Activated CD4-positive, alpha-beta T cell treated with anti-CD3 and anti-CD28 coated beads, Interleukin-2, amount 10 ng/mL, durations not matched to agents 24 days and 14 days (primary cell): ENCODE measurements at regions of chr16 and their contacts with region 1.

Region 1: DNA sequence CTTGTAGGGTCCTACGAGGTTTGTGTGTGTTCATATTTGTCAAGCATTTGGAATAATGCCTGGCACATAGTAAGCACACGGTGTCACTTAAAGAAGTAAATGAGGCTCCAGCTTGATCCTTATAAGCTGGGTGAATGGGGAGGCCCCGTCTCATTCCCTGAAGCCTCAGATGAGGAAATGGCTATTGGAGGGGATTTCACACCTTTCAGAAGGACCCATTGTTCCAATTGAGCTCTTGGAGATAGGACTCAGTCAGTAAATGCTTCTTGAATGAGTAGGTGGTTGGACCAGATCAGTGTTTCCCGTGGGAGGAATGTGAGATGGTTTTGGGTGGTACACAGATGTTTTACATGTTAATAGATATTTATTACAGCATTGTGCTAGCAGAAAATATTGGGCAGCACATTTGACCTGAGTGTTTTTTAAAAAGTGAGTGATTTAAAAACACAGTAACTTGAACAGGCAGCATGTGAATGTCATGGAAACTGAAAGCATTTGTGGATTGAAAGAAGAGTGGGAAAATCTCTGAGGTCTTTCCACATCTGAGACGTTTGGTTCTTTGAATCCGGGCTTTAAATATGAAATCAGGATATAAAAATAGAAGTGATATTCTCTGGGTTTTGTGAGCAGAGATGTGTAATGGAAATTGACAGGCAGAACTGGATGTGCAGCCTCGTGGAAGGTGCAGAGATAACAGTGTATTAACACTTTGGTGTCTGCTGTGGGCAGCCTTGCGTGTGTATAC is 36.4 kb upstream of the ARHGAP17 start:
- DNase-seq: peak; percentile 68
- H3K4me3 Mint-ChIP-seq: peak overlapping the region; percentile 57
- H3K27ac Mint-ChIP-seq: peak overlapping the region; percentile 74
- H3K4me1 Mint-ChIP-seq: peaks cover 51% of the 10 kb centered on the region
- H3K27me3 Mint-ChIP-seq: no peaks in the 10 kb centered on the region

Region 2: GRCh38 chr16:24539291-24539849 is 512.2 kb before region 1 on chr16 and contains the start of gene RBBP6:
- intact Hi-C with region 1: loop called (anchors 1 kb)
- DNase-seq: peak; percentile 98
- H3K4me3 Mint-ChIP-seq: peak within 1 kb of the TSS; percentile 100
- H3K27ac Mint-ChIP-seq: peak within 1 kb of the TSS; percentile 100
- H3K4me1 Mint-ChIP-seq: peaks cover 20% of the 10 kb centered on the region
- H3K27me3 Mint-ChIP-seq: no peaks in the 10 kb centered on the region
- total RNA-seq, gene RBBP6: 65.7 and 73.8 TPM in 2 replicates

Region 3: GRCh38 chr16:25031441-25032307 is 19.9 kb before region 1 on chr16:
- intact Hi-C with region 1: loop called (anchors 1 kb)
- DNase-seq: peak; percentile 97
- H3K4me3 Mint-ChIP-seq: peak overlapping the region; percentile 89
- H3K27ac Mint-ChIP-seq: peak overlapping the region; percentile 98
- H3K4me1 Mint-ChIP-seq: peaks cover 39% of the 10 kb centered on the region
- H3K27me3 Mint-ChIP-seq: no peaks in the 10 kb centered on the region

Region 4: GRCh38 chr16:25089351-25089750 is 37.8 kb after region 1 on chr16:
- intact Hi-C with region 1: no loop called
- DNase-seq: no peak
- H3K4me3 Mint-ChIP-seq: no peak overlapping the region
- H3K27ac Mint-ChIP-seq: no peak overlapping the region
- H3K4me1 Mint-ChIP-seq: peaks cover 19% of the 10 kb centered on the region
- H3K27me3 Mint-ChIP-seq: no peaks in the 10 kb centered on the region

Region 5: GRCh38 chr16:25111403-25112166 is 60.0 kb after region 1 on chr16 and contains the start of gene LCMT1:
- intact Hi-C with region 1: loop called (anchors 1 kb)
- DNase-seq: peak; percentile 98
- H3K4me3 Mint-ChIP-seq: peak within 1 kb of the TSS; percentile 98
- H3K27ac Mint-ChIP-seq: peak within 1 kb of the TSS; percentile 99
- H3K4me1 Mint-ChIP-seq: peaks cover 47% of the 10 kb centered on the region
- H3K27me3 Mint-ChIP-seq: no peaks in the 10 kb centered on the region
- total RNA-seq, gene LCMT1: 32.8 and 38.7 TPM in 2 replicates

Region 6: GRCh38 chr16:25224731-25225319 is 173.2 kb after region 1 on chr16:
- intact Hi-C with region 1: loop called (anchors 1 kb)
- DNase-seq: no peak
- H3K4me3 Mint-ChIP-seq: no peak overlapping the region
- H3K27ac Mint-ChIP-seq: no peak overlapping the region
- H3K4me1 Mint-ChIP-seq: no peaks in the 10 kb centered on the region
- H3K27me3 Mint-ChIP-seq: no peaks in the 10 kb centered on the region